Activated T-helper 1 cell treated with anti-CD3 and anti-CD28 coated beads, Interleukin-12 subunit alpha, Interleukin-12 subunit beta, Interleukin-2, Interleukin-4 antibody, amounts not matched to agents 30 ng/mL and 10 ng/mL and 1 ng/mL, durations not matched to agents 14 hours and 24 hours and 36 hours (primary cell): ENCODE measurements at regions of chr14 and their contacts with region 1.

Region 1: GRCh38 chr14:51873221-51873893 is 12.9 kb downstream of the GNG2 start:
- DNase-seq: peak; percentile 24
- H3K4me3 Mint-ChIP-seq: peak overlapping the region; percentile 59
- H3K27ac Mint-ChIP-seq: peak overlapping the region; percentile 80
- H3K4me1 Mint-ChIP-seq: peaks cover 63% of the 10 kb centered on the region
- H3K27me3 Mint-ChIP-seq: no peaks in the 10 kb centered on the region

Region 2: DNA sequence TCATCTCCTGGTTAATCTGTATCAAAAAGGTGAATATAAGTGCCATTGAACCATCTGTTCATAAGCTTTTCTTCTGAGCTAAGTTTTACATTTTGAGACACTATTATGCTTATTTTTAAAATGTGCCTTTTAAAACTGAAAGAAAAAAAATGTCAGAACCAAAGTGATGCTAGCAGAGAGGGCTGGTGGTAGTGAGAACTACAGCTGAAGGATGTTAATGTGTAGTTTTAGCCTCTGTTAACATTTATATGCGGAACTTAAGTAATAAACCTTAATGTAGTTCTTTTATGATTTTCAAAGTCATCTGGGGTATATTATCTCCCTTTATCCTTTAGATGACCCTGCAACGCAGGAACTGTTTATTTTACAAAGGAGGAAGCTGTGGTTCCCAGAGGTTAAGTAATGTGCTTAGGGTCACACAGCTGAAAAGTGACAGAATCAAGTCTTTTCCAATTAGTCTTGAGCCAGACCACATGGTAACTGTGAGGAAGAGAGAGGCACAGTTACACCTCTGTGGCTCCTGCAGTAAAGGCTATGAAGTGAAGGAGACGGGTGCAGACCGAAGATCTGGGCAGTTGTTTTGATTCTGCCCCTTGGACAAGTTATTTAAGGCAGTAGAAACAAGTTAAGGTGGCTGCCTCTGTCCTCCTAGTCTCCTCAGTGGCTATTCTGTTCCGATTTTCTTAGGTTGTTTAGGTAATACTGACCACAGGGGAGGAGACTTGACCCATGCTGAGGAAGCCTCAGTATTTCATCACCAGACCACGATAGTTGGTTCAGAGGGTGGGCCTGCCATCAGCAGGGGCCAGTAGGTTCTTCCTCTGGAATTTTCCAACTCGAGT is 10.9 kb after region 1 on chr14:
- intact Hi-C with region 1: loop called (anchors 1 kb)
- DNase-seq: no peak
- H3K4me3 Mint-ChIP-seq: peak overlapping the region; percentile 67
- H3K27ac Mint-ChIP-seq: peak overlapping the region; percentile 75
- H3K4me1 Mint-ChIP-seq: peaks cover 60% of the 10 kb centered on the region
- H3K27me3 Mint-ChIP-seq: no peaks in the 10 kb centered on the region

Region 3: GRCh38 chr14:51929906-51930682 is 56.7 kb after region 1 on chr14:
- intact Hi-C with region 1: loop called (anchors 2 kb)
- DNase-seq: no peak
- H3K4me3 Mint-ChIP-seq: no peak overlapping the region
- H3K27ac Mint-ChIP-seq: peak overlapping the region; percentile 91
- H3K4me1 Mint-ChIP-seq: peaks cover 54% of the 10 kb centered on the region
- H3K27me3 Mint-ChIP-seq: no peaks in the 10 kb centered on the region